ENCODE measurements at regions of chr6 and their contacts with region 1.

Region 1: GRCh38 chr6:106125925-106126435 is 39.8 kb downstream of the PRDM1 start:
- DNase-seq: peak; percentile 89
- ATAC-seq: peak; percentile 89
- H3K4me3 Mint-ChIP-seq: peak overlapping the region; percentile 54
- H3K27ac Mint-ChIP-seq: peak overlapping the region; percentile 86
- H3K4me1 Mint-ChIP-seq: peaks cover 49% of the 10 kb centered on the region
- H3K27me3 Mint-ChIP-seq: no peaks in the 10 kb centered on the region

Region 2: GRCh38 chr6:106114492-106115265 is 11.3 kb before region 1 on chr6:
- CTCF ChIA-PET with region 1: interaction called, 23 read pairs
- DNase-seq: peak; percentile 91
- ATAC-seq: peak; percentile 82
- H3K4me3 Mint-ChIP-seq: peak overlapping the region; percentile 59
- H3K27ac Mint-ChIP-seq: peak overlapping the region; percentile 96
- H3K4me1 Mint-ChIP-seq: peaks cover 92% of the 10 kb centered on the region
- H3K27me3 Mint-ChIP-seq: no peaks in the 10 kb centered on the region

Region 3: GRCh38 chr6:106155219-106155830 is 29.3 kb after region 1 on chr6:
- CTCF ChIA-PET with region 1: no interaction called
- DNase-seq: no peak
- ATAC-seq: no peak
- H3K4me3 Mint-ChIP-seq: no peak overlapping the region
- H3K27ac Mint-ChIP-seq: no peak overlapping the region
- H3K4me1 Mint-ChIP-seq: peaks cover 23% of the 10 kb centered on the region
- H3K27me3 Mint-ChIP-seq: no peaks in the 10 kb centered on the region

Region 4: GRCh38 chr6:106206905-106207304 is 80.9 kb after region 1 on chr6:
- CTCF ChIA-PET with region 1: no interaction called
- DNase-seq: no peak
- ATAC-seq: no peak
- H3K4me3 Mint-ChIP-seq: no peak overlapping the region
- H3K27ac Mint-ChIP-seq: no peak overlapping the region
- H3K4me1 Mint-ChIP-seq: peaks cover 22% of the 10 kb centered on the region
- H3K27me3 Mint-ChIP-seq: no peaks in the 10 kb centered on the region

Measured in activated CD8-positive, alpha-beta memory T cell treated with anti-CD3 and anti-CD28 coated beads, Interleukin-2, amount 10 ng/mL, durations not matched to agents 7 days and 5 days (primary cell).